Gastrocnemius medialis (tissue), 4 donors: ENCODE measurements at regions of chr5 and their contacts with region 1.

Region 1: DNA sequence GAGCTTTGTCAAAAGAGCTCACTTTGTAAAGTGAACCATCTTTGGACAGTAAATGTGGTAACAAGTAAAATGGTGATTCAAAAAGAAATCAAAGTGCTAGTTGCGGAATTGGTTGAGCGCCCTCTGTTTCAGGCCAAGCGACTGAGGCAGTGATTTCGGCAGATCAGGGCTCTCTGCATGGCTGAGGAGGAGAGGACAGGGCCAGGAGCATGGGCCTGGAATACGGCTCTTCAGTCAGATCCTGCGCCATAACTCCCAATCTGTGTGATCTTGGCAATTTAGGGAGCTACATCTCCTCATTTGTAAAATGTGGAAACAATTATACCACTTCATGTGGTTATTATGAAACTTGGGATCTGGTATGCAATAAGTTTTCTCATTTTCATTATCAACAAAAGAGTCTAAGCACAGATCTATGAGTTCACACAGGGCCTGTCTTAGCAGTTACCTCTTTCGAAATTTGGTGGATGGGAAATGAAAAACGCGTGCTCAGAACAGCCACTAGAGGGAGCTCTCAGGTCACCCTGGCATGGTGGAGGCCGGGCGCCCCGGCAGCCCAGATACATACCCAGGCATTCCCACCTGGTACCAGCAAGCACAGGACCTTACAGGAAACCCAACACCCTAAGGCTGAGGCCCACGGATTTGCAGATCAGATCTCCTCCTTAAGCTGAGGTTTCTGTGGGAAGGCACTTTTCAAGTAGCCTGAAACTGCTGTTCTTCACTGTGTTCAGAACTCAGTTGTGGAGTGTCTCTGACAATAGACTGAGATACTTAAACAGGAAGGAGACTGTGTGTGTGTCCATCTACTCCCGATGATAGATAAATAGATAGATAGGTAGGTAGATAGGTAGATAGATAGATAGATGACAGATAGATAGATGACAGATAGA is 303.7 kb downstream of the RAB3C start:
- DNase-seq: peak; percentile 12 to 70
- ATAC-seq: peak; percentile 73 to 77
- H3K4me3 ChIP-seq: no peak overlapping the region
- H3K27ac ChIP-seq: peak overlapping the region; percentile 0 to 69 (median 52)
- H3K4me1 ChIP-seq: peaks cover 8 to 13% of the 10 kb centered on the region in 2 donors
- H3K27me3 ChIP-seq: no peaks in the 10 kb centered on the region
- CTCF ChIP-seq: peak; percentile 81 to 90 (median 89)
- POLR2A ChIP-seq: no peak

Region 2: GRCh38 chr5:58318468-58318867 is 568.1 kb before region 1 on chr5:
- in situ Hi-C with region 1: no loop called
- intact Hi-C with region 1: no loop called
- DNase-seq: no peak
- ATAC-seq: no peak
- H3K4me3 ChIP-seq: no peak overlapping the region
- H3K27ac ChIP-seq: no peak overlapping the region
- H3K4me1 ChIP-seq: no peaks in the 10 kb centered on the region
- H3K27me3 ChIP-seq: no peaks in the 10 kb centered on the region
- CTCF ChIP-seq: no peak
- POLR2A ChIP-seq: no peak

Region 3: DNA sequence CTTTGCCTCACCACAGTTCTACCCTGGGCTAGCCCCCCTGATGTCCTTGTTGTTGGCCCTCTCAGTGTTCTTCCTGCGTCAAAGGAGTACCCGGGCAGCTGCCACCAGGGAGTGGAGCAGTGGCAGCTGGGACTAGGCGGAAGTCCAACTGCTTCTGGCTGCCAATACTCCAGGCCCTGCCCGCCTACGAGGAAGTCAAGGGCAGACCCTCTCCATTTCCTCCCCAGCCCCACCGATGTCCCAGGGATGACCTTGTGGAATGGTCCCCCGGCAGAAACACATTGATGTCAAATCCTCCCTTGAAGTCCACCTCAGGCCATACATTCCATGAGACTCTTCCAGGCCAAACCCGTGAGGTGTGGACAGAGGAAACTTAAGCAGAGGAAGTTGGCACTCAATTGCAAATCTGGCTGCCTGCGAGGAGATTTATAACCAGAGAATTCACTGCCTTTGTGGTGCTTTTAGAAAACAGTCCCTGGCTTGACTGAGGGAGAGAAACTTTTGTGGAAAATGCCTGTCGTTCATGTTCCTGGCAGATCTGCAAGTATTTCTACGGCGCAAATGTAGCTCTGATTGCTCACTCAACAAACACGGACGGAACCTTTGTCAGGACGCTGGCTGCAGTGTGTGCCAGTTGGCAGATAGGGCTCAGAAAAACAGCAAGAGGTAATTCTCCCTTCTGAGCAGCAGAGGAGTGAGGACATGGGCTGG is 36.1 kb after region 1 on chr5:
- in situ Hi-C with region 1: no loop called
- intact Hi-C with region 1: loop called (anchors 2 kb)
- DNase-seq: peak; percentile 75 to 94
- ATAC-seq: peak; percentile 91 to 93
- H3K4me3 ChIP-seq: peak overlapping the region; percentile 33 to 40 (median 38)
- H3K27ac ChIP-seq: peak overlapping the region; percentile 90 to 95 (median 92)
- H3K4me1 ChIP-seq: peaks cover 61% of the 10 kb centered on the region in 2 donors
- H3K27me3 ChIP-seq: no peaks in the 10 kb centered on the region
- CTCF ChIP-seq: peak in 1 of 5 experiments; percentile 12
- POLR2A ChIP-seq: peak in 1 of 2 donors; percentile 20

Region 4: DNA sequence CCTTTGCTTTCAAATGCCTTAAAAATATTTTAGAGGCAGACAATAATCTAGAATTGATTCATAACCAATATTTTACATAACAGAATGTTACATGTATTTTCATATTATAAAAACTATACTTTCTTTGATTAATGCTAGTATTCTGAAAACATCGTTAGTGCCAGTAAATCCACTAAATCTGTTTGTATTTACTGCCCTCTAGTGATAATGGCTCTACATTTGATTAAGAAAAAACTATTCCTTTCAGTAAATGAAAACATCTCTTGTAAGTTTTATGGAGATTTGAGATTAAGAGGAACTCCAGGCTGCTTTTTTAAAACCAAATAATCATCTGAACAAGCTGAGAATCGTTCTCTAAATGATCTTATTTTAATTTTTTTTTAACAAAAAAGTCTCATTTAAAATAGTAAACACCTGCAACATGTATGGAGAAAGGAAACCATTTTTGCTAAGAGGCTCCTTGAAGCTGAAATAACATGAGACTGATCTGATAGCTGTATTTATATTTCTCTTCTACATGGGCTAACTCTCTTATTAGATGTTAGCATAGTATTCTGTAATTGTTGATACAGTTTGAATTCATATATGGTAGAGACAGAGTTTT is 121.0 kb after region 1 on chr5:
- in situ Hi-C with region 1: loop called (anchors 10 to 25 kb)
- intact Hi-C with region 1: loop called (anchors 2 kb)
- DNase-seq: no peak
- ATAC-seq: no peak
- H3K4me3 ChIP-seq: no peak overlapping the region
- H3K27ac ChIP-seq: peak overlapping the region; percentile 58 to 79 (median 68)
- H3K4me1 ChIP-seq: peaks cover 69 to 76% of the 10 kb centered on the region in 2 donors
- H3K27me3 ChIP-seq: no peaks in the 10 kb centered on the region
- CTCF ChIP-seq: peak in 3 of 5 experiments; percentile 36 to 49 (median 46)
- POLR2A ChIP-seq: no peak

Region 5: DNA sequence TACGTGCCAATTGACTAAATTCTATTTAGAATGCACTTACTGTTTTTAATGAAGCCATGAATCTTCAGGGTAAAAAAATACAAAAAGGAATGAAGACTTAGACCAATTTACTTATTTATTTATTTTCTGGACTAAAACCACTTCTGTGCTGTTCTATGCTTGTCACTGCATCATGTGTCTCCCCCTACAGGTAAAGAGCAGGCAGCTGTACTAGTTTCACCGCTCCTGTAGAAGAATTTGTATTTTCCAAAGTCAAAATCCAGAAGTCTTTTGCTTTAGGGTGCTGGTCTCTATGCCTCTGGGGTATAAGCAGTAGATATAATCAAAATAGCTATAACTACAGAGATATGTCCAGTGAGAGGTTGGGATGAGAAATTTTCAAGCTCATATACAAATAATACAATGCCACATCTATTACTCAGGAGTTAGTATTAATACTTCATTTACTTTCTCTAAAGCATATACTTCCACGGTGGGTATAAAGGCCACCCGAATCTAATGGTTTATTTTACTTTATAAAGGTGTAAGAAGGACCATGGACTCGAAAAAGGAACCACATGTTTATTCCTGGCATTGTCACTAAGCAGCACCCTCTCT is 287.8 kb after region 1 on chr5:
- in situ Hi-C with region 1: loop called (anchors 5 to 10 kb)
- intact Hi-C with region 1: loop called (anchors 2 kb)
- DNase-seq: no peak
- ATAC-seq: peak; percentile 41 to 63
- H3K4me3 ChIP-seq: no peak overlapping the region
- H3K27ac ChIP-seq: peak overlapping the region; percentile 4 to 36 (median 26)
- H3K4me1 ChIP-seq: peaks cover 10 to 24% of the 10 kb centered on the region in 2 donors
- H3K27me3 ChIP-seq: no peaks in the 10 kb centered on the region
- CTCF ChIP-seq: peak; percentile 61 to 74 (median 67)
- POLR2A ChIP-seq: no peak

Region 6: DNA sequence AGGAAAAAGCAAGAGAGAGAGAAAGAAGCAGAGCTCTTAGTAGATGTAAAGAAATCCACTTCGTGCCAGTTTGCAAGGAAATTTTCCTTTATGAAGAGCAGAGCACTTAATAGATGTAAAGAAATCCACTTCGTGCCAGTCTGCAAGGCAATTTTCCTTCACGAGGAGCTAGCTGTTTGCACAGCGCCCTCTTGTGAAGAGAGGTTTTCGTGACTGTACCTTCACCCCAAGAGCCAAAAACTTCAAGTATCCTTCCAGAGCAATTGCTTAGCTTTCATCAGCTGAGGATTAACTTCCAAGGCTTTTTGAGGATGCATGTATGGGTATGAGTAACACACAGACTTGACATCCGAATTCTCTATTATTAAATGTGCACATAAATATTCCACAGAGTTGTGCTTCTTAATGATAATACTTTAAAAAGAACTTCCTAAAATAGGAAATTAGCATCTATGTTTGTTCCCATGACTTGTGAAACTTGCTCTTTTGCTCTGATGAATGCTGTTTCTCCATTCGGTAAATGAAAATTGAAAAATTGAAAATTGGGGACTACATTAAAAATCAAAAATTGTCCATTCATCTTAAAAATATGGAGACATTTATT is 481.3 kb after region 1 on chr5:
- in situ Hi-C with region 1: loop called in 1 of 4 experiments (anchors 25 kb)
- intact Hi-C with region 1: loop called (anchors 5 kb)
- DNase-seq: peak in 1 of 2 donors; percentile 50
- ATAC-seq: peak; percentile 57 to 63
- H3K4me3 ChIP-seq: no peak overlapping the region
- H3K27ac ChIP-seq: peak overlapping the region in 3 of 4 donors; percentile 82 to 86 (median 84)
- H3K4me1 ChIP-seq: peaks cover 44 to 46% of the 10 kb centered on the region in 2 donors
- H3K27me3 ChIP-seq: no peaks in the 10 kb centered on the region
- CTCF ChIP-seq: peak; percentile 44 to 75 (median 66)
- POLR2A ChIP-seq: no peak

Region 7: DNA sequence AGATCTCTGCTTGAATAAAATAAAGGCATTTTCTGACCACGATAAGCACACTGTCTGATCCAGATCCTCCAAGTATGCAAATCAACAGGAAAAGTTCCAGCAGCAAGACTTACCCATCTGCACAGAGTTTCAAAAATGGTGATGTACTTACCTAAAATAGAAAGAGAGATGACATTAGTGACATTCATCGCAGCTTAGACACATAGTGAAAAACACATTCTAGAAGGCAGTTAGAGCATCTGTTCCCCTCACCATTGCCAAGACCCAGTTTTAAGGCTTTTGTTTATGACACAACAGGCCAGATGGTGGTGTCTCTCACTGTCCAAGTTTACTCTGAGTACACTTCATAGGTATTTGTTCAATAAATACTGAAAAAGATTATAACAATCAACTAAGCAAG is 799.2 kb after region 1 on chr5:
- in situ Hi-C with region 1: loop called in 2 of 4 experiments (anchors 25 kb)
- intact Hi-C with region 1: no loop called
- DNase-seq: no peak
- ATAC-seq: peak; percentile 41 to 69
- H3K4me3 ChIP-seq: no peak overlapping the region
- H3K27ac ChIP-seq: no peak overlapping the region
- H3K4me1 ChIP-seq: peaks cover 12 to 14% of the 10 kb centered on the region in 2 donors
- H3K27me3 ChIP-seq: no peaks in the 10 kb centered on the region
- CTCF ChIP-seq: no peak
- POLR2A ChIP-seq: no peak